ENCODE measurements at regions of chrX and their contacts with region 1.

Region 1: GRCh38 chrX:132292793-132293192 is 73.5 kb upstream of the RAP2C start:
- DNase-seq: no peak
- H3K4me3 ChIP-seq: no peak overlapping the region
- H3K27ac ChIP-seq: no peak overlapping the region
- H3K4me1 ChIP-seq: no peaks in the 10 kb centered on the region
- H3K27me3 ChIP-seq: no peaks in the 10 kb centered on the region
- CTCF ChIP-seq: peak in 2 of 3 experiments; percentile 44 to 51; a peak in 3 of 4 replicates
- EP300 ChIP-seq: no peak
- POLR2A ChIP-seq: no peak
- RAD21 ChIP-seq: peak; percentile 67 to 73

Region 2: DNA sequence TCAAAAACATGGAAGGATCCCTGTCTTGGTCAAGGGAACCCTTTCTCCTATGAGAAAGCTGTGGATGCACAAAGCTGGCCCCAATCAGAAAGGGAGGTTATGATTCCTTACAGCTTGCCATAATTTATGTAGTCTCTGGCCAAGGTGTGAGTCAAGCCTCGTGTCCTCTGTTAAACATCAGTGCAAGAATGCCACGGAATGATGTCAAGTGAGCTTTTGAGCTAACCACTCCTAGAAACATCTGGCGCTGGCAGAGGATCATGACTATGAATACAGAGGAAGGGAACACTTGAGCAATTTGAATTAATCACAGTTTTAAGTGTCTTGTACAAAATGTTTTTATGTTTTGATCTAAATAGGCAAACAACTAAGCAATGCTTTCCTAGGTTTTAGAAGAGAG is 22.1 kb before region 1 on chrX:
- CTCF ChIA-PET with region 1: interaction called, 13 read pairs
- POLR2A ChIA-PET with region 1: no interaction called
- DNase-seq: no peak
- H3K4me3 ChIP-seq: no peak overlapping the region
- H3K27ac ChIP-seq: no peak overlapping the region
- H3K4me1 ChIP-seq: no peaks in the 10 kb centered on the region
- H3K27me3 ChIP-seq: no peaks in the 10 kb centered on the region
- CTCF ChIP-seq: no peak
- EP300 ChIP-seq: no peak
- POLR2A ChIP-seq: no peak
- RAD21 ChIP-seq: no peak

Region 3: GRCh38 chrX:132304599-132304998 is 11.8 kb after region 1 on chrX:
- CTCF ChIA-PET with region 1: interaction called, 13 read pairs
- POLR2A ChIA-PET with region 1: no interaction called
- DNase-seq: no peak
- H3K4me3 ChIP-seq: no peak overlapping the region
- H3K27ac ChIP-seq: no peak overlapping the region
- H3K4me1 ChIP-seq: no peaks in the 10 kb centered on the region
- H3K27me3 ChIP-seq: no peaks in the 10 kb centered on the region
- CTCF ChIP-seq: no peak
- EP300 ChIP-seq: no peak
- POLR2A ChIP-seq: no peak
- RAD21 ChIP-seq: no peak

Region 4: GRCh38 chrX:132375934-132376333 is 83.1 kb after region 1 on chrX:
- CTCF ChIA-PET with region 1: interaction called, 10 read pairs
- POLR2A ChIA-PET with region 1: no interaction called
- DNase-seq: no peak
- H3K4me3 ChIP-seq: no peak overlapping the region
- H3K27ac ChIP-seq: no peak overlapping the region
- H3K4me1 ChIP-seq: no peaks in the 10 kb centered on the region
- H3K27me3 ChIP-seq: no peaks in the 10 kb centered on the region
- CTCF ChIP-seq: peak in 2 of 3 experiments; percentile 9 to 10; a peak in 2 of 4 replicates
- EP300 ChIP-seq: no peak
- POLR2A ChIP-seq: no peak
- RAD21 ChIP-seq: peak in 1 of 2 experiments; percentile 9; a peak in 1 of 4 replicates

Region 5: DNA sequence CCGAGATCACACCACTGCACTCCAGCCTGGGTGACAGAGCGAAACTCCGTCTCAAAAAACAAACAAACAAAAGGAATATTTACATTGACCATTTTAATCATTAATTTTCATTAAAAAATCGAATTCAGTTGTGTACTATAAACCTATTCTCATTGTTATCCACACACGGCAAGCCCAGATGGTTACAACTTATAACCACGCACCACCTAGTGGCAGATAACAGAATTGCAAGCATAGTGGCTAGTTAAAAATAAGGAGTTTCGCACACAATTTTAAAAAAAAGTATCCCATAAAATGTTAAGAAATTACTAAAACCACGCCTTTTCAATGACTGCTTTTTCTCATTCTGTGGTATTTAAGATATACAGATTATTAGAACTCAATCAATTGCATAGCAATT is 170.6 kb after region 1 on chrX:
- CTCF ChIA-PET with region 1: interaction called, 12 read pairs
- POLR2A ChIA-PET with region 1: no interaction called
- DNase-seq: peak in 1 of 2 experiments; percentile 47
- H3K4me3 ChIP-seq: no peak overlapping the region
- H3K27ac ChIP-seq: no peak overlapping the region
- H3K4me1 ChIP-seq: no peaks in the 10 kb centered on the region
- H3K27me3 ChIP-seq: no peaks in the 10 kb centered on the region
- CTCF ChIP-seq: peak in 2 of 3 experiments; percentile 35 to 50; a peak in 2 of 4 replicates
- EP300 ChIP-seq: no peak
- POLR2A ChIP-seq: no peak
- RAD21 ChIP-seq: peak; percentile 44 to 62

Measured in H1 (cell line).